CD14-positive monocyte (primary cell): ENCODE measurements at regions of chr18 and their contacts with region 1.

Region 1: DNA sequence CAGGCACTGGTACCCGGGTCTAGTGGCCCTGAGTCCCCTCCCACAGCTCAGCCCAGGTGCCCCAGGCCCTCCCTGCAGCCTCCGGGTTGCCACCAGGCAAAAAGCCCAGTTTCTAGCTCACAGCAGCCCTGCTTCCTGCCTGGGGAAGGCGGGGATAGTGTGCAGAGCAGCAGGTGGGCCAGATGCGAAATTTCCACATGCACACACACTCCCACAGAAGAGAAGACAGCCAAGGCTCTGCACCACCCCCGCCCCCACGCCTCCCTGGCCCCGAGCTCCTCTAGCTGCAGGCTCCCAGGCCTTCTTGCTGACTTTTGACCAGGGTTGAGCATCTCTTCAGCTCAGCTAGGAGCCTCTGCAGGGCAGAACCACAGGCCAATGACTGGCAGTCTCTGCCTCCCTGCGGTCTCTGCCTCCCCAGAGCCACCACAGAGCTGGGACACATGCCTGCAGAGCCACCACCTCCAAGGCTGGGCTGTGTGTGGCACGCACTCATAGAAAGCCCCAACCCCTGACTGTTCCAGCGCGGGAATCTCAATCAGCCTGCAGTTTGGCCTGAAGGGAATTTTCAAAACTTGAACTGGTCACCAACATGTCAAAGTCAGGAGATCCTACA is 7.2 kb downstream of the SLC66A2 start:
- DNase-seq: no peak
- H3K4me3 ChIP-seq: no peak overlapping the region
- H3K4me3 Mint-ChIP-seq: no peak overlapping the region
- H3K27ac ChIP-seq: no peak overlapping the region
- H3K27ac Mint-ChIP-seq: peak overlapping the region in 3 of 7 donors; percentile 35 to 66 (median 52)
- H3K4me1 ChIP-seq: peaks cover 6 to 11% of the 10 kb centered on the region in 2 donors
- H3K4me1 Mint-ChIP-seq: peaks cover 24% of the 10 kb centered on the region
- H3K27me3 ChIP-seq: no peaks in the 10 kb centered on the region
- H3K27me3 Mint-ChIP-seq: peaks cover 0 to 5% (median 0%) of the 10 kb centered on the region in 3 donors
- CTCF ChIP-seq: no peak

Region 2: GRCh38 chr18:78995740-78996395 is 948.4 kb before region 1 on chr18:
- intact Hi-C with region 1: no loop called
- DNase-seq: no peak
- H3K4me3 ChIP-seq: no peak overlapping the region
- H3K4me3 Mint-ChIP-seq: no peak overlapping the region
- H3K27ac ChIP-seq: no peak overlapping the region
- H3K27ac Mint-ChIP-seq: no peak overlapping the region
- H3K4me1 ChIP-seq: no peaks in the 10 kb centered on the region
- H3K4me1 Mint-ChIP-seq: no peaks in the 10 kb centered on the region
- H3K27me3 ChIP-seq: peaks cover 0 to 5% of the 10 kb centered on the region in 2 donors
- H3K27me3 Mint-ChIP-seq: peaks cover 5 to 13% (median 7%) of the 10 kb centered on the region in 3 donors
- CTCF ChIP-seq: no peak

Region 3: GRCh38 chr18:79765491-79766245 is 178.6 kb before region 1 on chr18:
- intact Hi-C with region 1: no loop called
- DNase-seq: no peak
- H3K4me3 ChIP-seq: no peak overlapping the region
- H3K4me3 Mint-ChIP-seq: no peak overlapping the region
- H3K27ac ChIP-seq: no peak overlapping the region
- H3K27ac Mint-ChIP-seq: no peak overlapping the region
- H3K4me1 ChIP-seq: no peaks in the 10 kb centered on the region
- H3K4me1 Mint-ChIP-seq: no peaks in the 10 kb centered on the region
- H3K27me3 ChIP-seq: no peaks in the 10 kb centered on the region
- H3K27me3 Mint-ChIP-seq: peaks cover 4 to 8% (median 6%) of the 10 kb centered on the region in 3 donors
- CTCF ChIP-seq: no peak

Region 4: DNA sequence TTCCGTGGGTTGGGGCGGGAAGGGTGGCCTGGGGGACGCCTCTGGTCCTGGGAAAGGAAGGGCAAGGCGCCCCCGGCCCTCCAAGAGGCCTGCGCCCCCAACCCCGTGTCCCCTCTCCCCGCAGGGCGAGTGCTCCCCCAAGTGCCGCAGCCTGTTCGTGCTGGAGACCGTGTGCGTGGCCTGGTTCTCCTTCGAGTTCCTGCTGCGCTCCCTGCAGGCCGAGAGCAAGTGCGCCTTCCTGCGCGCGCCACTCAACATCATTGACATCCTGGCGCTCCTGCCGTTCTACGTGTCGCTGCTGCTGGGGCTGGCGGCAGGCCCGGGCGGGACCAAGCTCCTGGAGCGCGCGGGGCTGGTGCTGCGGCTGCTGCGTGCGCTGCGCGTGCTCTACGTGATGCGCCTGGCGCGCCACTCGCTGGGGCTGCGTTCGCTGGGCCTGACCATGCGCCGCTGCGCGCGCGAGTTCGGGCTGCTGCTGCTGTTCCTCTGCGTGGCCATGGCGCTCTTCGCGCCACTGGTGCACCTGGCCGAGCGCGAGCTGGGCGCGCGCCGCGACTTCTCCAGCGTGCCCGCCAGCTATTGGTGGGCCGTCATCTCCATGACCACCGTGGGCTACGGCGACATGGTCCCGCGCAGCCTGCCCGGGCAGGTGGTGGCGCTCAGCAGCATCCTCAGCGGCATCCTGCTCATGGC is 45.2 kb before region 1 on chr18:
- intact Hi-C with region 1: loop called in 1 of 2 experiments (anchors 10 kb)
- DNase-seq: no peak
- H3K4me3 ChIP-seq: no peak overlapping the region
- H3K4me3 Mint-ChIP-seq: no peak overlapping the region
- H3K27ac ChIP-seq: no peak overlapping the region
- H3K27ac Mint-ChIP-seq: no peak overlapping the region
- H3K4me1 ChIP-seq: no peaks in the 10 kb centered on the region
- H3K4me1 Mint-ChIP-seq: no peaks in the 10 kb centered on the region
- H3K27me3 ChIP-seq: no peaks in the 10 kb centered on the region
- H3K27me3 Mint-ChIP-seq: peaks cover 0 to 7% (median 5%) of the 10 kb centered on the region in 3 donors
- CTCF ChIP-seq: no peak

Region 5: DNA sequence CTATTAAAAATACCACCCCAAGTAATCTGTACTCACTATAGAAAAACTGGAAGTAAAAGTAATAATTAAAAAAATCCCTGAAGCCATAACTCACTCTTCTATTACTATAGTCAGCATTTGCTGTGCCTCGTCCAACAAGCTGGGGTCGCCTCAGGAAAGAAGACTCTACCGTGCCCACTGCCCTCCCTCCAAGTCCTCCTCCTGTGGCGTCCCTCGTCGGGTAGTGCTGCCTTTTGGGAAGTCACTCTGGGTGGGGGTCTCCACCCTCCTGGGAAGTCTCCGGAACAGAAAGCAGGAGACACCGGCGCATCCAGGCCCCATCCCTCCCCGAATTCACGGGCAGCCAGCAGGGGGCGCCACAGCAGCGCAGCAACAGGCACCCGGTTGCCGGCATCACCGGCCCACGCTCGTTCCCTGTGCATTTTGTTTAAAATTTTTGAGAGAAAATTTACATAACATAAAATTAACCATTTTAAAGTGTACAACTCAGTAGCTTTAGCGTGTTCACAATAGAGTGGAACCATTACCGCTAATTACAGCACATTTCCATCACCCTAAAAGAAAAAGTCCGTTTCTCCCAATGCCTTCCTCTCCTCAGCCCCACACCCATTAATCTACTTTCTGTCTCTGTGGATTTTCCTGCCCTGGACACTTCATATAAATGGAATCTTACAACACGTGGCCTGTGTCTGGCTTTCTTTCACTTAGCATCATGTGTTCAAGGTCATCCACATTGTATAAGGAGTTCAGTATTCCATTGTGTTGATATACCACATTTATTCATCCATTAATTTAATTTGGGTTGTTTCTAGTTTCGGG is 227.0 kb after region 1 on chr18:
- intact Hi-C with region 1: no loop called
- DNase-seq: peak in 1 of 3 donors; percentile 18
- H3K4me3 ChIP-seq: peak overlapping the region in 1 of 3 experiments; percentile 17
- H3K4me3 Mint-ChIP-seq: peak overlapping the region in 1 of 2 donors; percentile 56
- H3K27ac ChIP-seq: no peak overlapping the region
- H3K27ac Mint-ChIP-seq: no peak overlapping the region
- H3K4me1 ChIP-seq: no peaks in the 10 kb centered on the region
- H3K4me1 Mint-ChIP-seq: peaks cover 7% of the 10 kb centered on the region
- H3K27me3 ChIP-seq: peaks cover 0 to 7% of the 10 kb centered on the region in 2 donors
- H3K27me3 Mint-ChIP-seq: peaks cover 16 to 33% (median 20%) of the 10 kb centered on the region in 3 donors
- CTCF ChIP-seq: peak; percentile 93